Activated naive CD8-positive, alpha-beta T cell treated with anti-CD3 and anti-CD28 coated beads, Interleukin-2, amount 10 ng/mL, durations not matched to agents 7 days and 5 days (primary cell): ENCODE measurements at regions of chr4 and their contacts with region 1.

Region 1: DNA sequence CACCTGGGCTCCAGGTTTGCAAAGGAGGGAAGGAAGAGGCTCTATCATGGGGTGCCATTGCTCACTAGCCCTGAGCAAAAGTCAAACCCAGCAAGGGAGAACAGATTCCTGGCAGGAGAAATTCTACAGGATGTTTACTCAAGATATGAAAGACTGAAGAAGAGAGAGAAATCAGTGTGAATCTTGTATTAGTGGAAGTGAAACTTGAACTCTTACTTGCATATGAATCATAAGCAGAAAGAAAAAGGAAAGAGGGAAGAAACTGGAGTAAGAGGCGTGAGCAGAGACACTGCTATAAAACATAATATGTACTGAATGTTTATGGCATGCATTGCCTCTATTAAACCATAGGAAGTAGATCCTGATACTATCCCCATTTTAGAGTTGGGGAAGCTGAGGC is 60.9 kb downstream of the C4orf46 start:
- DNase-seq: no peak
- ATAC-seq: no peak
- H3K4me3 Mint-ChIP-seq: no peak overlapping the region
- H3K27ac Mint-ChIP-seq: no peak overlapping the region
- H3K4me1 Mint-ChIP-seq: no peaks in the 10 kb centered on the region
- H3K27me3 Mint-ChIP-seq: peaks cover 7% of the 10 kb centered on the region

Region 2: GRCh38 chr4:158268553-158268952 is 342.2 kb before region 1 on chr4:
- POLR2A ChIA-PET with region 1: interaction called, 10 read pairs
- DNase-seq: no peak
- ATAC-seq: no peak
- H3K4me3 Mint-ChIP-seq: no peak overlapping the region
- H3K27ac Mint-ChIP-seq: no peak overlapping the region
- H3K4me1 Mint-ChIP-seq: no peaks in the 10 kb centered on the region
- H3K27me3 Mint-ChIP-seq: peaks cover 13% of the 10 kb centered on the region